H1 (cell line): ENCODE measurements at regions of chr12 and their contacts with region 1.

Region 1: DNA sequence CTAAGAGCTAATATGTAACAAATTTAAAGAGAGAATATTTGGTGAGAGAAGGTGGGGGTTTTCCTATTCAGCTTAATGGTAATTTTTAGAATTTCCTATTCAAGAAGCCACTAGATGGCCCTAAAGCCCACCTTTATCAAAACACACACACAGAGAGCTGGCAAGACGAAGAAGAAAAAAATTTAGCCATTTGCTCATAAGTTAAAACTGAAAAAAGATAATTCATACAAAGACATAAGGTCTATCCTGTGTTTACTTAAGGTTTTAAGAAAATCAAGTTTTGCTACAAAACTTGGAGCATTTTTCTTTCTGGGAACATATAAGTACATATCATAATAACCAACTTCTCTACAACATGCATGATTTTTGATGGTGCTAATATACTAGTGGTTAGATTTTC is 46.8 kb upstream of the PCED1B start:
- DNase-seq: no peak
- H3K4me3 ChIP-seq: no peak overlapping the region
- H3K27ac ChIP-seq: no peak overlapping the region
- H3K4me1 ChIP-seq: peaks cover 0 to 8% (median 4%) of the 10 kb centered on the region in 4 experiments; a peak in 4 of 7 replicates
- H3K27me3 ChIP-seq: peaks cover 0 to 1% (median 0%) of the 10 kb centered on the region in 4 experiments; a peak in 2 of 7 replicates
- CTCF ChIP-seq: peak in 2 of 3 experiments; percentile 41 to 42; a peak in 2 of 4 replicates
- EP300 ChIP-seq: no peak
- POLR2A ChIP-seq: no peak
- RAD21 ChIP-seq: peak; percentile 79 to 81

Region 2: DNA sequence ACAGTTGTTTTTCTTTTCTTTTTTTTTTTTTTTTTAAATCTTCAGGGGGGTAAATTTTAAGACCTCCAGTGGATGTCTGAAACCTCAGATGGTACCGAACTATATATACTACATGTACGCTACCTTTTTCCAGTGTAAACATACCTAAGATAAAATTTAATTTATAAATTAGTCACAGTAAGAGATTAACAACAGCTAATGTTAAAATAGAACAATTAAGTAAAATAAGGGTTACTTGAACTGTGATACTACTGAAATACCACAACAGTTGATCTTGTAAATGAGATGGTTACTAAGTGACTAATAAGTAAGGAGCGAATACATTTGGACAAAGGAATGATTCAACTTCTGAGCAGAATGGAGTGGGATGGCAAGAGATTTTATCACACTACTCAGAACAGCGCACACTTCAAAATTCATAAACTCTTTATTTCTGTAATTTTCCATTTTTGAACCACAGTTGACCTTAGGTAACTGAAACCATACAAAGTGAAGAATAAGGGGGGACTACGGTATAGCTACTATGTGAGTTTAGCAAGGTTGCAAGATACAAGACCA is 33.8 kb before region 1 on chr12:
- CTCF ChIA-PET with region 1: no interaction called
- POLR2A ChIA-PET with region 1: no interaction called
- DNase-seq: no peak
- H3K4me3 ChIP-seq: no peak overlapping the region
- H3K27ac ChIP-seq: no peak overlapping the region
- H3K4me1 ChIP-seq: no peaks in the 10 kb centered on the region
- H3K27me3 ChIP-seq: no peaks in the 10 kb centered on the region
- CTCF ChIP-seq: no peak
- EP300 ChIP-seq: no peak
- POLR2A ChIP-seq: no peak
- RAD21 ChIP-seq: no peak

Region 3: GRCh38 chr12:47021298-47021697 is 11.3 kb before region 1 on chr12:
- CTCF ChIA-PET with region 1: interaction called, 27 read pairs
- POLR2A ChIA-PET with region 1: no interaction called
- DNase-seq: no peak
- H3K4me3 ChIP-seq: no peak overlapping the region
- H3K27ac ChIP-seq: no peak overlapping the region
- H3K4me1 ChIP-seq: no peaks in the 10 kb centered on the region
- H3K27me3 ChIP-seq: no peaks in the 10 kb centered on the region
- CTCF ChIP-seq: peak in 2 of 3 experiments; percentile 31 to 67; a peak in 2 of 4 replicates
- EP300 ChIP-seq: no peak
- POLR2A ChIP-seq: no peak
- RAD21 ChIP-seq: peak; percentile 77 to 81

Region 4: GRCh38 chr12:47155457-47156166 is 123.0 kb after region 1 on chr12:
- CTCF ChIA-PET with region 1: no interaction called
- POLR2A ChIA-PET with region 1: no interaction called
- DNase-seq: no peak
- H3K4me3 ChIP-seq: no peak overlapping the region
- H3K27ac ChIP-seq: no peak overlapping the region
- H3K4me1 ChIP-seq: no peaks in the 10 kb centered on the region
- H3K27me3 ChIP-seq: no peaks in the 10 kb centered on the region
- CTCF ChIP-seq: no peak
- EP300 ChIP-seq: no peak
- POLR2A ChIP-seq: no peak
- RAD21 ChIP-seq: no peak

Region 5: GRCh38 chr12:47307680-47308399 is 275.2 kb after region 1 on chr12:
- CTCF ChIA-PET with region 1: interaction called, 25 read pairs
- POLR2A ChIA-PET with region 1: no interaction called
- DNase-seq: peak in 1 of 2 experiments; percentile 5
- H3K4me3 ChIP-seq: no peak overlapping the region
- H3K27ac ChIP-seq: no peak overlapping the region
- H3K4me1 ChIP-seq: peaks cover 0 to 4% (median 0%) of the 10 kb centered on the region in 4 experiments; a peak in 1 of 7 replicates
- H3K27me3 ChIP-seq: no peaks in the 10 kb centered on the region
- CTCF ChIP-seq: peak in 2 of 3 experiments; percentile 61 to 72; a peak in 3 of 4 replicates
- EP300 ChIP-seq: no peak
- POLR2A ChIP-seq: no peak
- RAD21 ChIP-seq: peak; percentile 88 to 89

Region 6: GRCh38 chr12:47397664-47398281 is 365.1 kb after region 1 on chr12:
- CTCF ChIA-PET with region 1: interaction called, 18 read pairs
- POLR2A ChIA-PET with region 1: no interaction called
- DNase-seq: no peak
- H3K4me3 ChIP-seq: no peak overlapping the region
- H3K27ac ChIP-seq: no peak overlapping the region
- H3K4me1 ChIP-seq: no peaks in the 10 kb centered on the region
- H3K27me3 ChIP-seq: no peaks in the 10 kb centered on the region
- CTCF ChIP-seq: peak in 2 of 3 experiments; percentile 32 to 45; a peak in 3 of 4 replicates
- EP300 ChIP-seq: no peak
- POLR2A ChIP-seq: no peak
- RAD21 ChIP-seq: peak; percentile 71 to 76

Region 7: DNA sequence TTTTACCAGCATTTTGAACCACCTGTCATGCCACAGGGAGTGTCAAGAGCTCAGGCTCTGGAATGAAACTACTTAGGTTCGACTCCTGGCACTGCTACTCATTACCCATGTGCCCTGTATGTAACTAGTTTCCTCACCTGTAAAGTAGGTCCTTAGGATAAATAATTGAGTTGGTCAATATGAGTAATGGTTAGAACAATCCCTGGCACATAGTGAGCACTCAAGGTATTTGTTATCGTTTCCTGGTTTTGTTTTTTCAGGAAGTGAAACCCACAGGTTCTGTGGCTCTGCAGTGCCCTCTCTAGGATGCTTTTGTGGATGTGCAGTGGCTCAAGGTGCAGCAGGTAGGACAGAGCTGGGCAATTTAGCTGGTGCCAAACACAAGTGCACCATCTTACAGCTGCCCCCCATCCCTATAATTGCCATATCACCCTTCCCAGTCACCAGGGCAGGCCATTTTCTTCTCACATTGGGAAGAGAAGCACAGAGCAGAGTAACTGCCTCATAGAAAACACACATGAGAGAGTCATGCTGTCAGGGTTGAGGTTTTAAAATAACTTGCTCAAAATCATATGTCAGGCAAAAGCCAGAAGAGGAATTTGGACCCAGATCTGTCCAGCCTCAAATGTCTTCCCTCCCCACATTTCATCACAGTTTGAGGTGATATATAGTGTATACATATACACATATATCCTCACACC is 375.7 kb after region 1 on chr12:
- CTCF ChIA-PET with region 1: interaction called, 26 read pairs
- POLR2A ChIA-PET with region 1: no interaction called
- DNase-seq: no peak
- H3K4me3 ChIP-seq: no peak overlapping the region
- H3K27ac ChIP-seq: no peak overlapping the region
- H3K4me1 ChIP-seq: no peaks in the 10 kb centered on the region
- H3K27me3 ChIP-seq: no peaks in the 10 kb centered on the region
- CTCF ChIP-seq: peak; percentile 55 to 77 (median 63)
- EP300 ChIP-seq: no peak
- POLR2A ChIP-seq: no peak
- RAD21 ChIP-seq: peak; percentile 81 to 83